Heart right ventricle (tissue), 16 donors: ENCODE measurements at regions of chr11 and their contacts with region 1.

Region 1: DNA sequence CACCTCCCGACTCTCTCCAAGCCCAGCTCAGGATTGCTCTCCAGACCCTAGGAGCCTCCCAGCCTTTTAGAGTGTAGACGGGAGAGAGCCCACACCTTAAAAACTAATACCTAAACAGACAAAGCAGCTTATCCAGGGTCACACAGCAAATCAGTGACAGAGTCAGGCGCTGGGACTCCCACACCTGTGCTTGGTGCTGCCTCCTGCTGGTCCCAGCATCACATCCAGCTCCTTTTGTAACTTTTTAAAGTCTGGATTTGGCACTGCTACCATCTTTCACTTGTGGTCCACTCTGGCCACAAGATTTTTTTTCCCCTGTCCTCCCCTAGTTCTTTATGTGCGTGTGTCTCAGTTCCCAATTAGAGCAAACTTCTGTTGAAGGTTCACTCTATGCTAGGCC is 4.7 kb downstream of the ANO1 start:
- DNase-seq: no peak
- ATAC-seq: no peak
- H3K4me3 ChIP-seq: no peak overlapping the region
- H3K27ac ChIP-seq: peak overlapping the region in 1 of 10 donors; percentile 25
- H3K4me1 ChIP-seq: peaks cover 0 to 46% (median 3%) of the 10 kb centered on the region in 9 donors
- H3K27me3 ChIP-seq: peaks cover 0 to 44% (median 15%) of the 10 kb centered on the region in 7 donors
- CTCF ChIP-seq: peak in 1 of 9 donors; percentile 12

Region 2: DNA sequence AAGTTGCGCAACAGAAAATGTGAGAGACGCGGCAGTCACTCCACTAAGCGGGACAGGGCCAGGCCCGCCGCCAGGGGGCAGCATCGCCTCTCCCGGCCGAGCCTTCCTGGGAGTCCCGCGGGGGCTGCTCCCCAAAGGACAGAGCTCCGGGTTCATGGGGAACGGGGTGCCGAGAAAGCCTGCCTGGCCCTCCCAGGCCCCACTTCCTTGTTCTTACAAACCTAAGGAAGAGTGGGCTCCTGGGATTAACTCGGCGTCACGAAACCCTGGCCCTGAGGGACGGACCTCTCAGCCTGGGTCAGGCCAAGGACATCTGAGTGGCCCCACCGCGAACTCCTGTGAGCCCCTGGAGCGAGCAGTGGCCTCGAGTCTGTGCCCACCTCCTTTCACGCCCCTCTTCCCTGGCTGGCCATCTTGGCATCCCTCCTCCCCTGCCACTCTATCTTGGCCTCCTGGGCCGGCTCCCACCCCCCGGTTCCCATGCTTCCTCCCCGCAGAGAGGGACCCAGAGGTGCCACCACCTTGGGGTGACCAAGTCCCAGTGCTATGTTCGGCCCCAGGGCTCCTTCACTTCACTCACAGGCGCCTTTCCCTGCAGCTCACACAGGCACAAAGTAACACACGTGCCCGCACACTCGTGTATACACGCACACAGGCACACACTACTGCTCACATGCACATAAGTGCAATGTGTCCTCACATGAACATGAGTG is 163.7 kb before region 1 on chr11:
- intact Hi-C with region 1: loop called in 6 of 10 experiments (anchors 2 to 10 kb)
- DNase-seq: peak; percentile 80 to 86
- ATAC-seq: peak; percentile 63 to 79 (median 72)
- H3K4me3 ChIP-seq: peak overlapping the region in 3 of 10 donors; percentile 2 to 33 (median 9)
- H3K27ac ChIP-seq: peak overlapping the region in 9 of 10 donors; percentile 2 to 80 (median 56)
- H3K4me1 ChIP-seq: peaks cover 13 to 37% (median 32%) of the 10 kb centered on the region in 9 donors
- H3K27me3 ChIP-seq: peaks cover 0 to 21% (median 4%) of the 10 kb centered on the region in 7 donors
- CTCF ChIP-seq: peak; percentile 89 to 99 (median 96)

Region 3: DNA sequence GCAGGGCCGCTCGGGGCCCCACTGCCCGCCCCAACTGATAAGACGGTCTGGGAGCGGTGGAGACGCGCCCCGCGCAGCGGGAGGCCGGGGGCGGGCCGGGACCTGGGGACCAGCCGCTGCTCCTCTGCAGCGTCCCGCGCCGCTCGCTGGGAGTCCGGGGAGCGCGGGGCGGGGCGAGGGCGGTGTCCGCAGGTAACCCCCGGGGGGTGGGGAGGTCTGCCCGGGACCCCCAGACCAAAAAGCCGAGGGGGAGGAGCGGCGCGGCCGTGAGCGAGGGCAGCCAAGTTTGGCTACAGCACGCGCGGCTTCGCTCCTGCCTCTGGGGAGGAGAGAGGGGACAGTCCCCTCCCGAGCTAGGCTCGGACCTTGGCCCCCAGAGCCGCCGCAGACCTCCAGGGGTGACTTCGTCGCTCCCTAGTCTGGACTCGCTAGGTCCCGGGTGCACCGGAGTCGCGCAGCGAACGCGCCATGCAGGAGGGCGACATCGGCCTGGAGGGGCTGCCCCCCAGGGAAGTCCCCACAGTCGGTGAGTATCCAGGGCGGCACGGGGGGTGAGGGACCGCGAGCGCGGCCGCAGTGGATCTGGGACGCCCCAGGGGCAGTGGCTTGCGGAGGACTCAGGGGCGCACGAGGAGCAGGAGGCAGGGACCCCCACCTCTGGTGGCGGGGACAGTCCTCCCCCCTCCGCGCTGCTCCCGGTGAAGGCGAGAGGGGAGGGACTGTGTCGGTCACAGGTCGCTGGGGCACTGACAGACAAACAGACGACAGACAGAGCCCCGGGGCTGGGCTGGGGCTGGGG is 97.0 kb before region 1 on chr11:
- intact Hi-C with region 1: loop called in 1 of 10 experiments (anchors 10 kb)
- DNase-seq: peak in 1 of 2 donors; percentile 41
- ATAC-seq: peak; percentile 5 to 60 (median 38)
- H3K4me3 ChIP-seq: peak overlapping the region; percentile 11 to 62 (median 48)
- H3K27ac ChIP-seq: peak overlapping the region in 9 of 10 donors; percentile 35 to 80 (median 60)
- H3K4me1 ChIP-seq: peaks cover 8 to 37% (median 16%) of the 10 kb centered on the region in 9 donors
- H3K27me3 ChIP-seq: peaks cover 11 to 75% (median 55%) of the 10 kb centered on the region in 7 donors
- CTCF ChIP-seq: no peak

Region 4: DNA sequence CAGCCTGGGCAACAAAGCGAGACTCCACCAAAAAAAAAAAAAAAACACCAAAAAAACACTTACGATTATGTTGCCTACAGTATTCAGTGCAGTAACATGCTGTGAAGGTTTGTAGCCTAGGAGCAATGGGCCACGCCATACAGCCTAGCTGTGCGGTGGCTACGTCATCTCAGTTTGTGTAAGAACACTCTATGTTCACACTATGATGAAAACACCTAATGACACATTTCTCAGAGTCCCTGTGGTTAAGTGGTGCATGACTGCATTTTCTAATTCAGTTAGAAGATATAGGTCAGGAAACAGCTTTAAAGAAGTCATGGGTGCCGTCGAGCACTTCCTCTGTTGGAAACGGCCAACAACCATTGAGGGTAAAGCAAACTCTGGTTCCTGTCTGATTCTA is 80.4 kb before region 1 on chr11:
- intact Hi-C with region 1: no loop called
- DNase-seq: no peak
- ATAC-seq: no peak
- H3K4me3 ChIP-seq: no peak overlapping the region
- H3K27ac ChIP-seq: no peak overlapping the region
- H3K4me1 ChIP-seq: peaks cover 0 to 47% (median 20%) of the 10 kb centered on the region in 9 donors
- H3K27me3 ChIP-seq: peaks cover 0 to 6% (median 0%) of the 10 kb centered on the region in 7 donors
- CTCF ChIP-seq: no peak

Region 5: GRCh38 chr11:70099578-70100279 is 16.9 kb after region 1 on chr11:
- intact Hi-C with region 1: no loop called
- DNase-seq: no peak
- ATAC-seq: peak in 1 of 8 donors; percentile 9
- H3K4me3 ChIP-seq: no peak overlapping the region
- H3K27ac ChIP-seq: peak overlapping the region in 9 of 10 donors; percentile 12 to 73 (median 45)
- H3K4me1 ChIP-seq: peaks cover 0 to 58% (median 14%) of the 10 kb centered on the region in 9 donors
- H3K27me3 ChIP-seq: no peaks in the 10 kb centered on the region
- CTCF ChIP-seq: no peak

Region 6: GRCh38 chr11:70141486-70142220 is 58.8 kb after region 1 on chr11:
- intact Hi-C with region 1: no loop called
- DNase-seq: peak in 1 of 2 donors; percentile 28
- ATAC-seq: peak in 4 of 8 donors; percentile 11 to 52 (median 38)
- H3K4me3 ChIP-seq: peak overlapping the region in 3 of 10 donors; percentile 12 to 20 (median 15)
- H3K27ac ChIP-seq: peak overlapping the region in 2 of 10 donors; percentile 26 to 31
- H3K4me1 ChIP-seq: peaks cover 0 to 17% (median 11%) of the 10 kb centered on the region in 9 donors
- H3K27me3 ChIP-seq: peaks cover 0 to 49% (median 13%) of the 10 kb centered on the region in 7 donors
- CTCF ChIP-seq: no peak

Region 7: GRCh38 chr11:70343636-70344035 is 260.8 kb after region 1 on chr11:
- intact Hi-C with region 1: no loop called
- DNase-seq: no peak
- ATAC-seq: peak in 3 of 8 donors; percentile 46 to 51 (median 46)
- H3K4me3 ChIP-seq: no peak overlapping the region
- H3K27ac ChIP-seq: no peak overlapping the region
- H3K4me1 ChIP-seq: no peaks in the 10 kb centered on the region
- H3K27me3 ChIP-seq: no peaks in the 10 kb centered on the region
- CTCF ChIP-seq: no peak